HepG2 (cell line): ENCODE measurements at regions of chr13 and their contacts with region 1.

Region 1: DNA sequence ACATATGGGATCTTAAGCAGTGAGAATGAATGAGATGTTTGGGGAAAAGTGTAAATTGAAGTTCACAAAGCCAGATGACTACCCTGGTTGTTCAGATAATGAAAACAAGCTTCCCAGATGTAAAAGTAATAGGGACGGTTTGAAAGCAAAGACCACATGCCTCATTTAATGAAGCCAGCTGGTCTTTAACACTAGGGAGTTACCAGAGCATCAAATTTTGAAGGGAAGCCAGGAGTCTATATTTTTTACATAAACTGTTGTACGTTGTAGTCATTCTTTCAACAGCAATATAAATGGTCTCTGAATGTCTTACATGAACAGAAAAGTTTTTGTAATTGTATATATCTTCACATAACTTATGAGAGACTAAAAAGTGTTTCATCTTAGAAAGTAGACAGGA is 2604.5 kb upstream of the PCDH20 start:
- DNase-seq: no peak
- ATAC-seq: no peak
- H3K4me3 ChIP-seq: no peak overlapping the region
- H3K27ac ChIP-seq: no peak overlapping the region
- H3K4me1 ChIP-seq: no peaks in the 10 kb centered on the region
- H3K27me3 ChIP-seq: no peaks in the 10 kb centered on the region
- CTCF ChIP-seq: no peak
- EP300 ChIP-seq: no peak
- POLR2A ChIP-seq: no peak
- RAD21 ChIP-seq: no peak

Region 2: DNA sequence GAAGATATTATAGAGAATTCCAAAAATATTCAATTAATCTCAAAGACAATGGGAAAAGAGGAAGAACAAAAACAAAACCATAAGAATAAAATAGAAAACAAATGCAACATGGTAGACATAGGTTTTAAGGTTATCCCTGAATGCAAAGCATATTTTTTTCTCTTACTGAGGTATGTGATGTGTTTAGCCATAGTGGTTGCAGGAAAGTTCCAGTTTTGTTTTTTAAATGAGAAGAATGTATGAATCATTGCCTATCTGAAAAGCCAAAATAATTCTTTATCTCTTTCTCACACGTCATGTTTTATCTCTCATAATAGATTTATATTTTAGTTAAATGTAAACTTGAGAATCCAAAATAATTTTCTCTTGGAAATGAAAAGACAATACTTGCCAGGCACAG is 12.8 kb before region 1 on chr13:
- CTCF ChIA-PET with region 1: no interaction called
- POLR2A ChIA-PET with region 1: no interaction called
- in situ Hi-C with region 1: no loop called
- intact Hi-C with region 1: loop called (anchors 1 kb)
- DNase-seq: no peak
- ATAC-seq: no peak
- H3K4me3 ChIP-seq: no peak overlapping the region
- H3K27ac ChIP-seq: no peak overlapping the region
- H3K4me1 ChIP-seq: no peaks in the 10 kb centered on the region
- H3K27me3 ChIP-seq: no peaks in the 10 kb centered on the region
- CTCF ChIP-seq: no peak
- EP300 ChIP-seq: no peak
- POLR2A ChIP-seq: no peak
- RAD21 ChIP-seq: no peak